Right lobe of liver (tissue), 6 donors: ENCODE measurements at regions of chr5 and their contacts with region 1.

Region 1: DNA sequence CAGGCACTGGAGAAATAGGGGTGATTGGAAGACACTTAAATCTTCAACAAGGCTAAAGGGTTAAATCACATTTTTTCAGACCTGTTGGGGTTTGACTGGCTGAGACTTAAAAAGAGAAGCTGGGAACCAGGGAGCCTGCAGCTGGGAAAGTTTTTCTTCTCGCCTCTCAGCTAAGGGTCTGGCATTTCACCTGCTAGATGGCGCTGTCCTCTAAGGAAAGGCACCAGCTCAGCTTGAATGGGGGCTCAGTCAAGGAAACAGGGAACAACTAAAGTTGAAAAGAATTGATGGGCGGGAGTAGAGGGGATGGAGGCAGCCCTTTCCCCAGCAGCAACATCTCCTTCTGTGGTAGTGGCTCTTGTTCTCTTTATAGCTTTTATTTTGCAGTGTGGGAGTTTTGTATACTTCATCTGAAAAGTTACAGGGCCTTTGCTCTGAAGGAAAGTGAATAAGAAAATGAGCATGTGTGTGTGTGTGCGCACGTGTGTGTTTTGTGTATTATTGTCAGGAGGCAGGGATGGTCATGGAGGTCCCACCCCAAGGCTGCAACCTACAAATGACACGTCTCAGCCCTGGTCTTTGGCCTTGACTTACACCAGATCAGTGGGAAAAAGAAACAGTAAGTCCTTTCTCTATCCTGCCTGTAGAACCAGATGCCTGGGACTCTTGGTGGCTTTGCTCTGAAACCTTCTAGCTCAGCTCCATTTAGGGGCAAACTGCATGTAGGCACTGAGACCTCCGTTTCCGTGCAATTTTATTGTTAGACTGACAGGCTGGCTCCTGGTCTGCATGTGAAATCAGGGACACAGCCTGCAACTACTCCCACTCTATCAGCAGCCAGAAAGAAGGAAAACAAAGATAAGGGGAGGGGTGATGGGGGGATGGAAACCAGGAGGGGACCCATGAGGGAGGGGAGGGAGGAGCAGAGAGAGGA is 316.2 kb upstream of the CLINT1 start:
- DNase-seq: peak; percentile 54 to 72 (median 58)
- ATAC-seq: peak; percentile 85 to 95 (median 90)
- H3K4me3 ChIP-seq: no peak overlapping the region
- H3K27ac ChIP-seq: no peak overlapping the region
- H3K4me1 ChIP-seq: no peaks in the 10 kb centered on the region
- H3K27me3 ChIP-seq: no peaks in the 10 kb centered on the region
- CTCF ChIP-seq: peak; percentile 71 to 87 (median 79)
- POLR2A ChIP-seq: no peak

Region 2: GRCh38 chr5:157748760-157749461 is 426.3 kb before region 1 on chr5:
- intact Hi-C with region 1: no loop called
- DNase-seq: no peak
- ATAC-seq: no peak
- H3K4me3 ChIP-seq: no peak overlapping the region
- H3K27ac ChIP-seq: no peak overlapping the region
- H3K4me1 ChIP-seq: peaks cover 0 to 29% (median 8%) of the 10 kb centered on the region in 4 donors
- H3K27me3 ChIP-seq: no peaks in the 10 kb centered on the region
- CTCF ChIP-seq: no peak
- POLR2A ChIP-seq: no peak

Region 3: GRCh38 chr5:158026304-158027031 is 148.7 kb before region 1 on chr5:
- intact Hi-C with region 1: no loop called
- DNase-seq: no peak
- ATAC-seq: peak; percentile 64 to 80 (median 70)
- H3K4me3 ChIP-seq: no peak overlapping the region
- H3K27ac ChIP-seq: peak overlapping the region; percentile 51 to 68 (median 56)
- H3K4me1 ChIP-seq: peaks cover 0 to 42% (median 17%) of the 10 kb centered on the region in 4 donors
- H3K27me3 ChIP-seq: no peaks in the 10 kb centered on the region
- CTCF ChIP-seq: no peak
- POLR2A ChIP-seq: no peak

Region 4: DNA sequence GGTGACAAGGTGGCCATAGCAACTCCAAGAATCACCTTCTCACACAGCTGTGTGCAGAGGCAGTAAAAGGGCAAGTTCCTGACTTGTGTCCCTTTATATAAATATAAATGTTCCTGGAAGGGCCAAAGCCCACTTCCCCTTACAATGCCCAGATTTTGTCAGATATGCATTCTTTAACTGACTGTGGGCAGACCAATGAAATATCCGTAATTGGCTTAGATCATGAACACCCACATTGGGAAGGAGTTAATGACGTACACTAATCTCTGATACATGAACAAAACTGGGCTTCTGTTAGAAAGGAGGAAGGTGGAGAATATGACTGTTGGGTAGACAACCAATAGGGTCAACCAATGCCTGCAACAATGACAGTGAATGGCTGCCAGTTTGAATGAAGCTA is 80.9 kb after region 1 on chr5:
- intact Hi-C with region 1: no loop called
- DNase-seq: no peak
- ATAC-seq: no peak
- H3K4me3 ChIP-seq: no peak overlapping the region
- H3K27ac ChIP-seq: no peak overlapping the region
- H3K4me1 ChIP-seq: no peaks in the 10 kb centered on the region
- H3K27me3 ChIP-seq: no peaks in the 10 kb centered on the region
- CTCF ChIP-seq: no peak
- POLR2A ChIP-seq: no peak

Region 5: DNA sequence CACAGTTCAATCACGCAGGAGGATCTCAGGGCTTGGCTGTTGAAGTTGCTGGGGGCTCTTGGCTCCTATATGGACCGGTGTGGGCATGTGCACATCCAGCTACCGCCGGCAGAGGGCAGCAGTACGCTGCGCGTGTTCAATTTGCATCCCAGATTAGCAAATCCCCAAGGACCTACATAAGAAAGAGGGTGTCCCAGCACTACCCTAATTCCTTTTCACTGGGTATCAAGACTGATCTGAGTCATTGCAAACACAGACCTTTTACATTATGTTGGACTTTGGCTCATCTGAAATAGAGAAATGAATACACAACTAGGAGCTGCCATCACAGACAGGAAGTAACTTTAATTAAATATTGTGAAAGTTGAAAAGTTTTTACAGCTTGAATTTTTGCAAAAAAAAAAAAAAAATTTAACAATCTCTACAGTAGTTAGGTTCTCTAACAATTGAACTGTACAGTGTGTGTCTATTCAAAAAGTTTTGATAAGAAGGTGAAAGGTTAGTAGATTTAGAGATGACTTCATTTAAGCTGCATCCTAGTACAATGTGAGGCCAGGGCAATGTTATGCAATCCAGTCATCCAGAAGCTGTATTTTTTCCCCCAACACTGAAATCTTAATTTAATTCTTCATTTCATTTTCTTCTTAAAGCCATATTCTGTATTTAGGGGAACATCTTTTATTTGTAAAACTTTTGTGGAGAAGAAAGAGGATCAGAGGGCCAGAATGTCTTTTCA is 520.6 kb after region 1 on chr5:
- intact Hi-C with region 1: loop called in 1 of 2 experiments (anchors 10 kb)
- DNase-seq: peak; percentile 62 to 79 (median 78)
- ATAC-seq: peak; percentile 94 to 97 (median 96)
- H3K4me3 ChIP-seq: no peak overlapping the region
- H3K27ac ChIP-seq: no peak overlapping the region
- H3K4me1 ChIP-seq: peaks cover 0 to 16% (median 0%) of the 10 kb centered on the region in 4 donors
- H3K27me3 ChIP-seq: no peaks in the 10 kb centered on the region
- CTCF ChIP-seq: peak; percentile 95 to 97 (median 96)
- POLR2A ChIP-seq: no peak

Region 6: GRCh38 chr5:159106569-159107282 is 931.5 kb after region 1 on chr5:
- intact Hi-C with region 1: loop called (anchors 10 kb)
- DNase-seq: peak; percentile 73 to 80 (median 74)
- ATAC-seq: peak; percentile 86 to 92 (median 89)
- H3K4me3 ChIP-seq: peak overlapping the region in 2 of 3 donors; percentile 23 to 43
- H3K27ac ChIP-seq: no peak overlapping the region
- H3K4me1 ChIP-seq: peaks cover 0 to 25% (median 2%) of the 10 kb centered on the region in 4 donors
- H3K27me3 ChIP-seq: peaks cover 7 to 34% of the 10 kb centered on the region in 2 donors
- CTCF ChIP-seq: peak; percentile 88 to 97 (median 95)
- POLR2A ChIP-seq: no peak